AG04449 (cell line): ENCODE measurements at regions of chr5 and their contacts with region 1.

Region 1: DNA sequence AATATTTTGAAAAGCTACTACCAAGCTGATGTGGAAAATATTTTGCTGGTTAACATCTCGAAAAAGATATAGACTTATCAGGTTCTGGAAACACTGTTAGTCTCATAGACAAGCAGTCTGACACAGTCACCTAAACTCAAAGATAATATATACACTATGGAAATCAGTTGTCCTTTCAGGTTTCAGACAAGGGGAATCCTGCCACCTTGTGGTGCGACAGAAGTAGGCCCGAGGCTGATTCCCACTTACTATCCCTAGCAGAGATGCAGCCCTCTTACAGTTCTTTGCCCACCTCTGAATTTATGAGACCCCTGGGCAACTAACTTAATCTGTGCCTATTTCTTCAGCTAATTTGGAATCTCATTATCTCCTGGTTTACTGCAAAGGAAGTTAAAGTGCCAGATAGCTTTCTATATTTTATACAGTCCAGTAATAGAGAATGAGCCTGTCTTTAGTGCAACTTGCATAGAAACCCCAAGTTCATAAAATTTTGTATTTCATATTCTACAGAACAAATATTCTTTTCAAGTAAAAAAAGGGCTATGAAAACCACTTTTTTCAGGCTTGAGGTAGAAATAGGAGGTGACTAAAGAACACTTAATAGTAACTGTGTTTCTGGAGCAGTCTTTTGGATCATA is 16.9 kb downstream of the RAD1 start:
- DNase-seq: peak; percentile 38
- H3K4me3 ChIP-seq: no peak overlapping the region
- CTCF ChIP-seq: peak; percentile 76

Region 2: GRCh38 chr5:34496701-34497469 is 401.5 kb before region 1 on chr5:
- CTCF ChIA-PET with region 1: interaction called, 12 read pairs
- POLR2A ChIA-PET with region 1: no interaction called
- DNase-seq: no peak
- H3K4me3 ChIP-seq: no peak overlapping the region
- CTCF ChIP-seq: no peak

Region 3: GRCh38 chr5:34517249-34517648 is 381.1 kb before region 1 on chr5:
- CTCF ChIA-PET with region 1: interaction called, 40 read pairs
- POLR2A ChIA-PET with region 1: no interaction called
- DNase-seq: no peak
- H3K4me3 ChIP-seq: no peak overlapping the region
- CTCF ChIP-seq: no peak

Region 4: GRCh38 chr5:34522599-34523386 is 375.6 kb before region 1 on chr5:
- CTCF ChIA-PET with region 1: interaction called, 40 read pairs
- POLR2A ChIA-PET with region 1: no interaction called
- DNase-seq: peak; percentile 68
- H3K4me3 ChIP-seq: no peak overlapping the region
- CTCF ChIP-seq: peak; percentile 65

Region 5: DNA sequence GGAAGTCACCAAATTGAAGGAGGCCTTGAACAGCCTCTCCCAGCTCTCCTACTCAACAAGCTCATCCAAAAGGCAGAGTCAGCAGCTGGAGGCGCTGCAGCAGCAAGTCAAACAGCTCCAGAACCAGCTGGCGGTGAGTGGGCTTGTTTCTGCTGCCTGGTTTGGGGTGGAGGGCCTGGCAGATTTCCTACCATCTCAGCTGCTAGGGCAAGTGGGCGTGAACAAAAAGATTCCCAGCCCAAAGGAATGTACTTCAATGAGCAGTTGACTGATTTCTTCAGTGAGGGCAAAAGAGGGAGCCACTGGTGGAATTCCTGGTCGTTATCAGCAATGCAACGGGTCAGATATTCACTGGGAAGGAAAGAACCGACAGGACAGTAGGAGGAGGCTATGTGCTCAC is 72.0 kb before region 1 on chr5:
- CTCF ChIA-PET with region 1: interaction called, 18 read pairs
- POLR2A ChIA-PET with region 1: no interaction called
- DNase-seq: no peak
- H3K4me3 ChIP-seq: no peak overlapping the region
- CTCF ChIP-seq: no peak

Region 6: DNA sequence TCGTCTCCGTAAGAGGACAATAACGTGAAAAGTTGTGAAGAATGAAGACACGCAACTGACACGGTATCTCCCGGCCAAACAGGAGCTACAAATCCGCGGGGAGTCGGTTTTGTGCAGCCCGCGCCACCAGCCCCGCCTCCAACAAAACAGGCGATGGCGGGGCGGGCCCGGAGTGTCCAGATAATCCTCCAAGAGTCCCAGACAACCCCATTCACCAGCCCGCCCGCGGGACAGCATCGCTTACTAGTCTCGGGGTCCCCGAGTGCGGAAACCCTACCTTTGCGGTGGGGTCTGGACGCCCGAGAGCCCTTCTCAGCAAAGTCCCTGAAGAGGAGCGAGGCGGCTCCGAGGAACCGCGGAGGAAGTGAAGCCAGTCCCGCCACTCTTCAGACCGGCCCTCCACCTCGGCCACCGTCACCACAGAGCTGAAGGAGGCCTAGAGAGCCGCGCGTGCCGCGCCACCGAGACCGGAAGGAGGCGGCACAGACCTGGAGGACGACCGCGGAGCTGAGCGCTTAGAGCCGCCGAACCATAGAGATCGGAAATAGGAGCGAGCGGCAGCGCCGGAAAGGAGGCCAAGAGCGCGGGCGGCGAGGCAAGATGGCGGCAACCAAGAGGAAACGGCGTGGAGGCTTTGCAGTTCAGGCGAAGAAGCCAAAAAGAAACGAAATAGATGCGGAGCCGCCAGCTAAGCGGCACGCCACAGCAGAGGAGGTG is 16.9 kb after region 1 on chr5 and contains the starts of genes BRIX1 and RAD1:
- CTCF ChIA-PET with region 1: interaction called, 18 read pairs
- POLR2A ChIA-PET with region 1: interaction called, 3 read pairs
- DNase-seq: peak; percentile 77
- H3K4me3 ChIP-seq: peak within 1 kb of the TSS; percentile 93
- CTCF ChIP-seq: peak; percentile 15